Spleen (tissue), 13 donors: ENCODE measurements at regions of chr7 and their contacts with region 1.

Region 1: GRCh38 chr7:129367700-129368388 is 66.4 kb upstream of the STRIP2 start:
- DNase-seq: peak; percentile 89
- H3K4me3 ChIP-seq: peak overlapping the region in 1 of 8 donors; percentile 35
- H3K27ac ChIP-seq: peak overlapping the region in 3 of 8 donors; percentile 4 to 15 (median 8)
- H3K4me1 ChIP-seq: peaks cover 4 to 21% (median 14%) of the 10 kb centered on the region in 6 donors
- H3K27me3 ChIP-seq: no peaks in the 10 kb centered on the region
- CTCF ChIP-seq: peak; percentile 34 to 94 (median 85)
- POLR2A ChIP-seq: no peak

Region 2: DNA sequence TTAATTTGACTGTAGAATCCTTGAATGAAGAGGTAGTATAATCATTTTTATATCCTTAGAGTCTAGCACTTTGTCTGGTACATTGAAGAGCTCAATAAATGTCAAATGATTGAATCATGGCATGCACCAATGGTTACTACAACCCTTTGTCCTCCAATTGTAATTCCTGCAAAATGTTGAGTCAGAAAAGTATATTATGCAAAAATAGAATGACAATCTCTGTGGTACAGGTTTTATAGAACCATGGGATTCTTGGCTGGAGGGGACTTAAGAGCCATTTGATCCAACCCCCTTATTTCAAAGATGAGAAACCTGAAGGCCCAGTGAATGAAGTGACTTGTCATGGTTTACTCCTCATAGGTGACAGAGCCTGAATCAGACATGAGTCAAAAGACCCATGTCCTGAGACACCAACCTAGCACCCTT is 103.6 kb after region 1 on chr7:
- intact Hi-C with region 1: loop called (anchors 5 kb)
- DNase-seq: no peak
- H3K4me3 ChIP-seq: no peak overlapping the region
- H3K27ac ChIP-seq: no peak overlapping the region
- H3K4me1 ChIP-seq: peaks cover 0 to 7% (median 1%) of the 10 kb centered on the region in 6 donors
- H3K27me3 ChIP-seq: no peaks in the 10 kb centered on the region
- CTCF ChIP-seq: no peak
- POLR2A ChIP-seq: no peak

Region 3: GRCh38 chr7:129635300-129636029 is 267.6 kb after region 1 on chr7:
- intact Hi-C with region 1: loop called (anchors 10 kb)
- DNase-seq: peak; percentile 76
- H3K4me3 ChIP-seq: no peak overlapping the region
- H3K27ac ChIP-seq: no peak overlapping the region
- H3K4me1 ChIP-seq: peaks cover 4 to 69% (median 16%) of the 10 kb centered on the region in 6 donors
- H3K27me3 ChIP-seq: no peaks in the 10 kb centered on the region
- CTCF ChIP-seq: peak; percentile 36 to 75 (median 57)
- POLR2A ChIP-seq: no peak

Region 4: DNA sequence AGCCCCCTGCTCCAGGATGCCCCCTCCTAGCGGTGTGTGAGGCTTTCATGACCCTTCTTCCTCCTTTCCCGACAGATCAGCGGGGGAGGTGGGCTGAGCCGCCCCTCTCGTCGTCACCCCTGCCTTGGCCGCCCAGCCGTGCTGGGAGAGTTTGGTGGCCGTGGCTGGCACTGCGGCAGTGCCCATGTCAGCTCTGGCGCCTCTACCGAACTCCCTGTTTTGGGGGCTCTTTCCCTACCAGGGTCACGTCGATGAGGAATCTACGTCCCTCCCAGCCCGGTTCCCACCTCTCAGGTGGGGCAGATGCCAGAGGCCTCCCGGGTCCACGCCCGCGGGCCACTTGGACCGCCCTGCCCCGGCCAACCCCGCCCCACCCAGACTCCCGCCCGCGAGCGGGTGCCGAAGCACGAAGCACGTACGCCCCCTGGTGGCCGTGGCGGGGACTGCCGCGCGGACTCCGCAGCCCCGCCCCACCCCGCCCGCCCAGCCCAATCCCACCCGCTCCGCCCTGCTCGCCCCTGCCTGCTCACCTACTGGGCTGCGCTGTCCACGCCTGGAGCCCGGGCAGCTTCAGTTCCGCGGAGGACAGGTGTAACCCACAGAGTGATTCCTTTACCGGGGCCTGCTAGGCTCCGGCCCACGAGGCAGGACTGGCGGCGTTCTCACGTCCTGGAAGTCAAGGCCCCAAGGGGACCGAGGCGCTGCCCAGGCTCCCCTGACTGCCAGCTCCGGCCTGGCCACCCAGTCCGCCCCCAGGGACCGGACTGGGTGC is 457.8 kb after region 1 on chr7:
- intact Hi-C with region 1: loop called (anchors 10 kb)
- DNase-seq: peak; percentile 99
- H3K4me3 ChIP-seq: peak overlapping the region; percentile 60 to 82 (median 72)
- H3K27ac ChIP-seq: peak overlapping the region in 4 of 8 donors; percentile 34 to 83 (median 65)
- H3K4me1 ChIP-seq: peaks cover 8 to 43% (median 32%) of the 10 kb centered on the region in 6 donors
- H3K27me3 ChIP-seq: peaks cover 0 to 6% (median 0%) of the 10 kb centered on the region in 7 donors
- CTCF ChIP-seq: peak in 10 of 11 experiments; percentile 29 to 100 (median 98)
- POLR2A ChIP-seq: no peak